AG04450 (cell line): ENCODE measurements at regions of chr4 and their contacts with region 1.

Region 1: DNA sequence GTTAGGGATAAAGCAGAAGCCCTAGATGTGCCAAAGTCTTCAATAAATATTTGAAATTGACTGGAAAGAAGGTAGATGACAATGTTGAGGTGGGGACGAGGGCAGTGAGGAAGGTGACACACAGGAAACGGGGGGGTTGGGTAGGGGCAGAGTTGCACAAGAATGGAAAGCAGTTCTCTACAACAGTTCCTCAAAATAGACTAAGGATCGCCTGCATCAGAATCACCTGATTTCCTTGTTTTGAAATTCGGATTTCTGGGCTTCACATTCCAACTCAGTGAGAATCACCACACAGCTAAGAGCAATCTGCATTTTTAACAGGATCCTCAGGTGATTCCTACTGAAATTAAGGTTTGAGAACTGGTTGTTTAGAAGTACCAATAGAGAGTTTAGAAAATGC is 70.6 kb downstream of the ARFIP1 start:
- DNase-seq: no peak
- H3K4me3 ChIP-seq: no peak overlapping the region
- H3K27ac ChIP-seq: no peak overlapping the region
- H3K27me3 ChIP-seq: no peaks in the 10 kb centered on the region
- CTCF ChIP-seq: no peak

Region 2: GRCh38 chr4:152831416-152831815 is 19.0 kb before region 1 on chr4:
- CTCF ChIA-PET with region 1: interaction called, 10 read pairs
- POLR2A ChIA-PET with region 1: no interaction called
- DNase-seq: no peak
- H3K4me3 ChIP-seq: no peak overlapping the region
- H3K27ac ChIP-seq: no peak overlapping the region
- H3K27me3 ChIP-seq: no peaks in the 10 kb centered on the region
- CTCF ChIP-seq: no peak

Region 3: GRCh38 chr4:153137159-153137558 is 286.8 kb after region 1 on chr4:
- CTCF ChIA-PET with region 1: interaction called, 11 read pairs
- POLR2A ChIA-PET with region 1: no interaction called
- DNase-seq: no peak
- H3K4me3 ChIP-seq: no peak overlapping the region
- H3K27ac ChIP-seq: no peak overlapping the region
- H3K27me3 ChIP-seq: peaks cover 2% of the 10 kb centered on the region
- CTCF ChIP-seq: no peak

Region 4: DNA sequence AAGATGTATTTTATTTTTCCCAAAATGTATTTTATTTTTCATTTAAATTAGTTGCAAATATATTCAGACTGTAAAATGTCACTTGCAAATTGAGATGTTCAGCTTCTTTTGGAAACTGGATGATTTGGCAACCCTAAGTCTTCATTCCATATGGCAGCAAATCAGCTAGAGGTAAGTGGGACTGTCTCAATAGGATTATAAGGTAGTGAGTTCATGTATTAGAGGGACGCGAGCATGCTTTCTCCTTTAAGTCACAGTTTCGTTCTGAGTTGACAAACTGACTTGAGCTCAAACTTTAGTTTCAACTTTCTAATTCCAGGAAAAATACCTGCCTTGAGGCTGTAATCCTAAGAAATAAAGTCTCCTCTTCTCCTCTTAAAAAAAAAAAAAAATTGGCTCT is 571.6 kb after region 1 on chr4:
- CTCF ChIA-PET with region 1: no interaction called
- POLR2A ChIA-PET with region 1: no interaction called
- DNase-seq: no peak
- H3K4me3 ChIP-seq: no peak overlapping the region
- H3K27ac ChIP-seq: no peak overlapping the region
- H3K27me3 ChIP-seq: no peaks in the 10 kb centered on the region
- CTCF ChIP-seq: no peak